CD8-positive, alpha-beta T cell (primary cell): ENCODE measurements at regions of chr1 and their contacts with region 1.

Region 1: DNA sequence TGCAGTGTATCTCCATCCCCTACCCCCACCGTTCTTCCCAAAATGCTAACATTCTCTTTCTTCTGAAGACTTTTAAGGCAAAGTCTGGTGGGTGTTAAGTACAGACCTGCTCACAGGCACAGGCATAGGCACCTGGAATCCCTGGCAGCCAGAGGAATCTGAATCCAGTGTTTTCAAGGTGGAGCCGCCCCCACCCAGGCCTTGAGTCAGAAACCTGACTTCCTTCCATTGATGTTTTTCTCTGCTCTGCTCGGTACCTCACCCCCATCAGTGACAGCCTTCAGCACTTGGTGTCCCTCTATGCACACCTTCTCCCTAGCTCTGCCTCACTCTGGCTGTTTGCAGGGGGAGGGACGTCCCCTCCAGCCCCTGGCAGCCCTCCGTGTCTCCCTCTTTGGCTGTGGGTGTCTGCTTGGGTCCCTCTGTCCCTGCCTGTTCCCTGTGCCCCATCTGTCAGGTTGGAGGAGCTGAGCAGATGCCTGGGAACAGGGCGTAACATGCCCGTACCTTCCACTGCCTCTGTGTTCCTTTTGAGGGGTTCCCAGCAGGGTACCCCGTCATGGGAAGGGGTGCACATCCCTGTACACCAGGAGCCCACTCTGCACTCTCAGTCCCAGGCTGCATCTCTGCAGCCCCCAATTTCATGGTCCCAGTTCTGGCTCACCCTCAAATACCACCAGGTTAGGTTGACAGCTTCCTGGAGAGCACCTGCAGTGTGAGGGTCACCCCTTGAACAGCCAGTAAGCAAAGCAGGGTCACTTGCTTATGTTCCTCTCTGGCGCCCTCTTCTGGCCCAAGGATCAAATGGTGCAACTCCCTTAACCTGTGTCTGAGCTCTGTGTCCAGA is 6.7 kb downstream of the NCDN start:
- DNase-seq: peak; percentile 61 to 87 (median 83)
- ATAC-seq: peak; percentile 74
- H3K4me3 ChIP-seq: no peak overlapping the region
- H3K4me3 Mint-ChIP-seq: no peak overlapping the region
- H3K27ac ChIP-seq: no peak overlapping the region
- H3K27ac Mint-ChIP-seq: no peak overlapping the region
- H3K4me1 ChIP-seq: no peaks in the 10 kb centered on the region
- H3K4me1 Mint-ChIP-seq: peaks cover 32% of the 10 kb centered on the region
- H3K27me3 ChIP-seq: no peaks in the 10 kb centered on the region
- H3K27me3 Mint-ChIP-seq: no peaks in the 10 kb centered on the region
- CTCF ChIP-seq: peak; percentile 72

Region 2: GRCh38 chr1:35577071-35577998 is 13.1 kb after region 1 on chr1:
- CTCF ChIA-PET with region 1: interaction called, 16 read pairs
- POLR2A ChIA-PET with region 1: interaction called, 6 read pairs
- intact Hi-C with region 1: no loop called
- DNase-seq: peak; percentile 27 to 85 (median 71)
- ATAC-seq: peak; percentile 78
- H3K4me3 ChIP-seq: peak overlapping the region; percentile 49 to 87
- H3K4me3 Mint-ChIP-seq: peak overlapping the region; percentile 90
- H3K27ac ChIP-seq: peak overlapping the region; percentile 4 to 54
- H3K27ac Mint-ChIP-seq: peak overlapping the region; percentile 82
- H3K4me1 ChIP-seq: peaks cover 24% of the 10 kb centered on the region
- H3K4me1 Mint-ChIP-seq: peaks cover 26% of the 10 kb centered on the region
- H3K27me3 ChIP-seq: no peaks in the 10 kb centered on the region
- H3K27me3 Mint-ChIP-seq: peaks cover 3% of the 10 kb centered on the region
- CTCF ChIP-seq: no peak

Region 3: GRCh38 chr1:35641233-35641866 is 77.1 kb after region 1 on chr1 and contains the start of gene PSMB2:
- CTCF ChIA-PET with region 1: interaction called, 6 read pairs
- POLR2A ChIA-PET with region 1: no interaction called
- intact Hi-C with region 1: loop called in 1 of 2 experiments (anchors 2 kb)
- DNase-seq: peak; percentile 91 to 99 (median 97)
- ATAC-seq: peak; percentile 94
- H3K4me3 ChIP-seq: peak within 1 kb of the TSS; percentile 94 to 97
- H3K4me3 Mint-ChIP-seq: peak within 1 kb of the TSS; percentile 100
- H3K27ac ChIP-seq: peak within 1 kb of the TSS; percentile 89 to 93
- H3K27ac Mint-ChIP-seq: peak within 1 kb of the TSS; percentile 97
- H3K4me1 ChIP-seq: peaks cover 33% of the 10 kb centered on the region
- H3K4me1 Mint-ChIP-seq: peaks cover 37% of the 10 kb centered on the region
- H3K27me3 ChIP-seq: peaks cover 0 to 8% of the 10 kb centered on the region in 2 experiments
- H3K27me3 Mint-ChIP-seq: peaks cover 16% of the 10 kb centered on the region
- CTCF ChIP-seq: no peak
- total RNA-seq, gene PSMB2: 36.8 to 38.8 TPM

Region 4: DNA sequence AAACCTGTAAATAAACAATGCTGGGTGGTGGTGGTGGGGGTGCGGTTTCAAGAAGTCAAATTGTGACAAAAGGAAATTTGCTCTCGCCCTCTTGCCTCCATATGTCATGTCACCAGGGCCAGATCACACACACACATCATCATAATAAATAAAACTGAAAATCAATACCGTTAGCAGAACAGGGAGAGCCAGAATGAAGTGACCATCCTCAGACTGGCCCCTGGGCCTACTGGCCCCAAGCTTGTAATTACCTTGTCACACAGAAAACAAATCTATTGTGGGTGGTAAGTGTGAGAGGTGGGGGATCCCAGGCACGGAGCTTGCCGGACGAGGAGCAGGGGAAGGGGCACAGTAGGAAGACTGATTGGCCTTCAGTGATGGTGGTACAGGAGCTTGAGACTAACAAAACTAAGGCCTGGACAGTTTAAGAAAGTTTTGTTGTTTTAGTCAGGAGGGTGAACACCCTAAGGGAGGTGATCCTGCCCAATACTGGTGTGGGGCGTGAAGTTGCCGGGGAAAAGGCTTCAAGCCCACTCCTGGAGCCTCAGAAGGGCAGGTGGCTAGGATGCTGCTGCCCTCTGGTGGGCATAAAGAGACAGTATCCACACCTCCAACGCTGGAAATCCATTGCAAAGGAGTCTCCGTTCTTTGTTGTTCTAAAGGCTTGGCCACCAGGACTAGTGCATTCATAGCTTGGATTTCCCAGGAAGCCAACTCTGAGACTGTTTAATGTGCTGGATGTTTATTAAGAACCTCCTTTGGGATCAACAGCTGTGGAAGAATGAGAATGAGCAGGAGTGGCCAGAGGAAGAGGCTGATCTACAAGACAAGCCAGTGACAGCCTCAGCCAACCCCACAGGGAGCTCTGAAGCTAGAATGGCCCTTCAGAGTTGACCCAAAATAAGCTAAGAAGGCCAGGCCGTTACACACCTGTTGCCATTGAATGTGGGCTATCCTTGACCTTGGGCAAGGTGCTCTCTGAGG is 162.5 kb after region 1 on chr1:
- CTCF ChIA-PET with region 1: interaction called, 136 read pairs
- POLR2A ChIA-PET with region 1: interaction called, 5 read pairs
- intact Hi-C with region 1: loop called (anchors 1 kb)
- DNase-seq: peak in 8 of 9 experiments; percentile 30 to 79 (median 53)
- ATAC-seq: peak; percentile 90
- H3K4me3 ChIP-seq: no peak overlapping the region
- H3K4me3 Mint-ChIP-seq: no peak overlapping the region
- H3K27ac ChIP-seq: no peak overlapping the region
- H3K27ac Mint-ChIP-seq: no peak overlapping the region
- H3K4me1 ChIP-seq: no peaks in the 10 kb centered on the region
- H3K4me1 Mint-ChIP-seq: no peaks in the 10 kb centered on the region
- H3K27me3 ChIP-seq: no peaks in the 10 kb centered on the region
- H3K27me3 Mint-ChIP-seq: no peaks in the 10 kb centered on the region
- CTCF ChIP-seq: peak; percentile 87

Region 5: GRCh38 chr1:35769759-35770446 is 205.6 kb after region 1 on chr1 and contains the start of gene CLSPN:
- CTCF ChIA-PET with region 1: interaction called, 23 read pairs
- POLR2A ChIA-PET with region 1: interaction called, 4 read pairs
- intact Hi-C with region 1: loop called (anchors 1 kb)
- DNase-seq: peak; percentile 86 to 96 (median 93)
- ATAC-seq: peak; percentile 94
- H3K4me3 ChIP-seq: peak within 1 kb of the TSS; percentile 90 to 97
- H3K4me3 Mint-ChIP-seq: peak within 1 kb of the TSS; percentile 99
- H3K27ac ChIP-seq: peak within 1 kb of the TSS; percentile 61 to 81
- H3K27ac Mint-ChIP-seq: peak within 1 kb of the TSS; percentile 92
- H3K4me1 ChIP-seq: peaks cover 5% of the 10 kb centered on the region
- H3K4me1 Mint-ChIP-seq: peaks cover 8% of the 10 kb centered on the region
- H3K27me3 ChIP-seq: no peaks in the 10 kb centered on the region
- H3K27me3 Mint-ChIP-seq: no peaks in the 10 kb centered on the region
- CTCF ChIP-seq: no peak
- total RNA-seq, gene CLSPN: 0.41 to 0.81 TPM